GM18951 (cell line): ENCODE measurements at regions of chr7 and their contacts with region 1.

Region 1: DNA sequence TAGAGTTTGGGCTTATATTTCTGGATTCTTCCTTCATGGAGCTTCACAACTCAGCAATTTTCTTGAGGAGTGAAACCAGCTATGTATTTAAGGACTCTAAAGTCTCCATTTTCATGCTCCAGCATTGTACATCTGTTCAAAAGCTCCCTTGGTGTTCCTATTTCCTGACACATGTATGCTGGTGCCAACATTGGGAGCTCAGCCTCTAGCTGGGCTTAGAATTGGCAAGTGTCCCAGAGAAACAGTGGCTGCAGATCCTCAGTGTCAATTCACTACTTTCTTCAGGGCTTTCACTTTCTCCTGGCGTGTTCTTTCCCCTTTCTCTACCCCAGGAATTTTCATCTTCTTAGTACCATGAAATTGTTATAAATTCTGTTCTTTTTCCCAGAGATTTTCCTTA is 103.1 kb downstream of the ZNF467 start:
- POLR2A ChIP-seq: no peak

Region 2: GRCh38 chr7:149729983-149730801 is 59.9 kb after region 1 on chr7:
- in situ Hi-C with region 1: loop called (anchors 5 kb)
- POLR2A ChIP-seq: no peak